Right cardiac atrium (tissue), 5 donors: ENCODE measurements at regions of chr5 and their contacts with region 1.

Region 1: DNA sequence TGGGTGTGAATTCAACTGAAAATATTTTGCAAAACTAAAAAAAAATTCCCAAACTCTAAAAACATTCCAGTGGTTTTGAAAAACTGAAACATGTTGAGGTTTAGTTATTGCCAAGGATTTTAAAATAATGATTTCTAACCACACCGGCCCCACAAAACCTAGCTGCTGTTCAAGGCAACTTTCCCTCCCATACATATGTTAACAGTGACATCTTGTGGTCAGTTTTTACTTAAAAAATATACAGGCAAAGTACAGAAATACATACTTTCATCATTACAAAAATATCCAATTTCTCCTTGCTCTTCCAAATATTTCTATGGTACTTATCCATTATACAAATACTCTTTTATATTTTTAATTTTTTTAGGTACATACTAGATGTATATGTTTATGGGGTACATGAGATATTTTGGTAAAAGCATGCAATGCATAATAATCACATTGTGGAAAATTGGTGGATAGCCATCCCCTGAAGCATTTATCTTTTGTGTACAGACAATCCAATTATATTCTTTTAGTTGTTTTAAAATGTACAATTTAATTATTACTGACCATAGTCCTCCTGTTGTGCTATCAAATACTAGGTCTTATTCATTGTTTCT is 34.4 kb upstream of the MRPS30 start:
- DNase-seq: no peak
- ATAC-seq: no peak
- H3K4me3 ChIP-seq: no peak overlapping the region
- H3K27ac ChIP-seq: no peak overlapping the region
- H3K4me1 ChIP-seq: no peaks in the 10 kb centered on the region
- H3K27me3 ChIP-seq: no peaks in the 10 kb centered on the region

Region 2: GRCh38 chr5:43661102-43661501 is 1113.3 kb before region 1 on chr5:
- intact Hi-C with region 1: loop called in 1 of 4 experiments (anchors 5 kb)
- DNase-seq: no peak
- ATAC-seq: no peak
- H3K4me3 ChIP-seq: no peak overlapping the region
- H3K27ac ChIP-seq: no peak overlapping the region
- H3K4me1 ChIP-seq: no peaks in the 10 kb centered on the region
- H3K27me3 ChIP-seq: no peaks in the 10 kb centered on the region

Region 3: DNA sequence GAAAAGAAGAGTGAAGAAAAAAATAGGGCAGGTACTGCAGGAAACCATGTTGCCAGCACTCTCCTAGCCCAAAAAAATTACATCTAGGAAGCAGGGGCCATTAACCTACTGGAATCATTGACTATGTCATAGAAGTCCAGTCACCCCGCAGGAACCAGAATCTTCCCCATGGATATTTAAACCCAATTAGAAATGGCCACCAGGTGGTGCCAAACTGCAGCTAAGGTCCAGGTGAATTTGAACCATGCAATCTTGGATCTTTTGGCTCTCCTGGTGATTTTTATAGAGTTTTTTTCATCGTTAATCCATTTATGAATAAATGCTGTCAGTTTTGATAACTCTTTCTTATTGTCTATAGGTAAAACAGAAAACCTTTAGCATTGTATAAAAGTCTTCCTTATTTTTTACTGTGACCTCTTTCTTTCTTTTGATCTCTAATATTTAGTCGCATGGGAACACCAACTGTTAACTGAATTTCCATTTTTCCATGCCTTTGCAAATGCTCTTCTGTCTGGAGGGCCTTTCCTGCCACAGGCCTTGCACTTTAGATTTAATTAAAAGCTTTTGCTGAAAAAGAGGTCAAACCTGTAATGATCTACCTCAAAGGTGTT is 237.6 kb before region 1 on chr5:
- intact Hi-C with region 1: loop called in 3 of 4 experiments (anchors 5 kb)
- DNase-seq: peak in 1 of 3 donors; percentile 12
- ATAC-seq: no peak
- H3K4me3 ChIP-seq: no peak overlapping the region
- H3K27ac ChIP-seq: no peak overlapping the region
- H3K4me1 ChIP-seq: no peaks in the 10 kb centered on the region
- H3K27me3 ChIP-seq: no peaks in the 10 kb centered on the region